ENCODE measurements at regions of chr1 and their contacts with region 1.

Region 1: GRCh38 chr1:17289721-17290120 is 18.3 kb upstream of the PADI4 start:
- DNase-seq: no peak
- H3K4me3 Mint-ChIP-seq: no peak overlapping the region
- H3K27ac Mint-ChIP-seq: no peak overlapping the region
- H3K4me1 Mint-ChIP-seq: peaks cover 26% of the 10 kb centered on the region
- H3K27me3 Mint-ChIP-seq: no peaks in the 10 kb centered on the region
- CTCF ChIP-seq: no peak

Region 2: DNA sequence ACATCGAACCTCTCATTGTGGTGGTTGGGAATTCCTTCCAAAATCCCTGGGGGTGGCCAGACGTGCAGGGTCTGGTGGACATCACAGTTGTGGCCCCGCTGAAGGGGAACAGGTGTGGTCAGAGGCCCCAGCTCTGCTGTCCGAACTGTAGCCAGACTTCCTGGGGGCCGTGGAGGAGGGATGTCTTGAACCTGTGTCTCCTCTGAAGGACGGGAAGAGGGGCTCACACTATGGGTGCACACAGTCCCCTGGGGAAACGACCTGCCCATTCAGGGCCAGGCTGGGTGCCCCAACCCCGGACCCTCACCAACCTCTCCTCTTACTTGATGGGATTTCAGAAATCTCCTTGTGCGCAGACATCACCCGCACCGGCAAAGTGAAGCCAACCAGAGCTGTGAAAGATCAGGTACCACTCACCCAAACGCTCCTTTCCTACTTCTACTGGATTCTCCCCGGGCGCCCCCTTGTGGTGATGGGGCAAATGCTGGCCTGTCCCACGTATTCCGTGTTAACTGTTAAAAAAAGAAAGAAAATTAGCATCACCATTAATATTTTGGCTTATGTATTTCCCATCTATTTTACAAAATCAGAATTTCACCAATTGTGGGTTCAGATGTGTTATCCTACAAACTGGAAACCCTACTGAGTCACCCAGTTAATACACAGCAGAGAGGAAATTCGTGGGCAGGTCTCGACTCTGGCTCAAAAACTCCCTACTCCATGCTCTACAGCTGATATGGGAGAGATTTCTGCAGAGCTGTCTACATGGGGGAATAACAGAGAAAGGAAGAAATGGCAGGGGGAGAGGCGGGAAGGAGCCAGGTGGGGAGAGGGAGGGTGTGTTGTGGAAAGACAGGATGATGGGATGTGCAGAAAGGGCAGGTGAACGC is 46.3 kb after region 1 on chr1:
- CTCF ChIA-PET with region 1: no interaction called
- intact Hi-C with region 1: loop called (anchors 2 kb)
- DNase-seq: peak; percentile 88
- H3K4me3 Mint-ChIP-seq: no peak overlapping the region
- H3K27ac Mint-ChIP-seq: no peak overlapping the region
- H3K4me1 Mint-ChIP-seq: peaks cover 19% of the 10 kb centered on the region
- H3K27me3 Mint-ChIP-seq: peaks cover 58% of the 10 kb centered on the region
- CTCF ChIP-seq: peak; percentile 62